A549 (cell line): ENCODE measurements at regions of chr17 and their contacts with region 1.

Region 1: DNA sequence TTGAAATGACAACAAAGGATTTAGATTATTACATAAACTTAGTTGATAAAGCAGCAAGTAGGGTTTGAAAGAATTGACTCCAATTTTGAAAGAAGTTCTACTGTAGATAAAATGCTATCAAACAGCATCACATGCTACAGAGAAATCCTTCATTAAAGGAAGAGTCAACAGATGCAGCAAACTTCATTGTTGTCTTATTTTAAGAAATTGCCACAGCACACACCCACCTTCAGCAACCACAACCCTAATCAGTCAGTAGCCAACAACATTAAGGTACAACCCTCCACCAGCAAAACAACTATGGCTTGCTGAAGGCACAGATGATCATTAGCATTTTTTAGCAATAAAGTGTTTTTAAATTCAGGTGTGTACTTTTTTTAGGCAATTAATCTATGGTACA is 75.1 kb upstream of the NSRP1 start:
- DNase-seq: no peak
- ATAC-seq: no peak
- H3K4me3 ChIP-seq: no peak overlapping the region
- H3K27ac ChIP-seq: no peak overlapping the region
- H3K4me1 ChIP-seq: no peaks in the 10 kb centered on the region
- CTCF ChIP-seq: no peak
- EP300 ChIP-seq: no peak
- POLR2A ChIP-seq: no peak
- RAD21 ChIP-seq: no peak

Region 2: GRCh38 chr17:29883497-29883896 is 158.1 kb before region 1 on chr17:
- CTCF ChIA-PET with region 1: no interaction called
- POLR2A ChIA-PET with region 1: no interaction called
- DNase-seq: no peak
- ATAC-seq: no peak
- H3K4me3 ChIP-seq: no peak overlapping the region
- H3K27ac ChIP-seq: no peak overlapping the region
- H3K4me1 ChIP-seq: no peaks in the 10 kb centered on the region
- CTCF ChIP-seq: no peak
- EP300 ChIP-seq: no peak
- POLR2A ChIP-seq: no peak
- RAD21 ChIP-seq: no peak

Region 3: GRCh38 chr17:30021708-30022317 is 19.7 kb before region 1 on chr17:
- CTCF ChIA-PET with region 1: interaction called, 11 read pairs
- POLR2A ChIA-PET with region 1: no interaction called
- DNase-seq: peak; percentile 65 to 70
- ATAC-seq: peak; percentile 73; a peak in 4 of 6 replicates
- H3K4me3 ChIP-seq: no peak overlapping the region
- H3K27ac ChIP-seq: no peak overlapping the region
- H3K4me1 ChIP-seq: no peaks in the 10 kb centered on the region
- CTCF ChIP-seq: peak; percentile 97
- EP300 ChIP-seq: no peak
- POLR2A ChIP-seq: no peak
- RAD21 ChIP-seq: peak; percentile 85 to 86